CD14-positive monocyte (primary cell): ENCODE measurements at regions of chr12 and their contacts with region 1.

Region 1: DNA sequence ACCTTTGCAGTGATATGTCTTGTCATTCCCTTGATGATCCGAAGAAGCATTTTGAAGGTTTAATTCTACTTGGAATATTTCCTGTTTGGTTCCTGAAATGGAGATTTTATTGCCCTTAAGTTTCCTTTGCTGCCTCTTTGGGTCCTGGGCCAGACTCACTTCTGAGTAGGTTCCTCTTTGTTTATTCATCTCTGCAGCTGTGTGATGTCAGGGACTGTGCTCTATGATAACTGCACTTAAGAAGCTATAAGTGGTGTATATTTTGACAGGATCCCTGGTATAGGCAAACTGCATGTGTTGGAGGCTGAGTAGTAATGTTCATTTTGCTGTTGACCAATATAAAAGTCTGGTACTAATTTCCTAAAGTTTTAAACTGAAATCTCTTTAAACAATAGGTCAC is at the start of gene KLRC4:
- DNase-seq: peak; percentile 8 to 29 (median 10)
- H3K4me3 ChIP-seq: no peak within 1 kb of the TSS
- H3K4me3 Mint-ChIP-seq: no peak within 1 kb of the TSS
- H3K27ac ChIP-seq: no peak within 1 kb of the TSS
- H3K27ac Mint-ChIP-seq: no peak within 1 kb of the TSS
- H3K4me1 ChIP-seq: peaks cover 11 to 14% of the 10 kb centered on the region in 2 donors
- H3K4me1 Mint-ChIP-seq: peaks cover 12% of the 10 kb centered on the region
- H3K27me3 ChIP-seq: peaks cover 0 to 16% of the 10 kb centered on the region in 2 donors
- H3K27me3 Mint-ChIP-seq: peaks cover 5 to 10% (median 9%) of the 10 kb centered on the region in 3 donors
- CTCF ChIP-seq: no peak
- polyA plus RNA-seq, gene KLRC4: not detected

Region 2: DNA sequence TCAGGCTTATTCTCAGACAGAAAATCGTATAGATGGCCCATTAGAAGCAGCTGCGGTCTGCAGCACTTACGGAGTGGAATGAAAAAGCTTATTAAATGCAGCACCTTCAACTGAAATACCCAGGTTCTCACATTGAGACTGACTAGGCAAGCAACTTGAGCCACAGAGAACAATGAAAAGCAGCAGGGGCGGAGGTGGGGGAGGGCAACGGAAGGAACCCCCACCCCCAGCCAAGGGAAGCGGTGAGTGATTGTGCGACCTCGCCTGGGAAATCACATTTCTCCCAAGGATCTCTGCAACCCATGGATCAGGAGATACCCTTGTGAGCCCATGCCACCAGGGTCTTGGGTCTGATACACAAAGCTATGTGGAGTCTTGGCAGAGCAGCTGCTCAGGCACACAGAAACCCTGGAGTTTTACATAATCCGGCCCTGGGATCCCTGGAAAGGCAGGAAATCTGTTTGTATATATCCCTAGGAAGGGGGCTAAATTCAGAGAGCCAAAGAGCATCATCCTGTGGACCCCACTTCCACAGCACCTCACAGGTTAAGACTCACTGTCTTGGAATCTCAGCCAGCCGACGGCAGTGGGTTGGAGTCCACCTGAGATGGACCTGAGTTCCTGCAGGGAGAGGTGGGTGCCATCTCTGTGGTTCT is 1239.3 kb before region 1 on chr12:
- intact Hi-C with region 1: loop called in 1 of 2 experiments (anchors 10 kb)
- DNase-seq: no peak
- H3K4me3 ChIP-seq: no peak overlapping the region
- H3K4me3 Mint-ChIP-seq: no peak overlapping the region
- H3K27ac ChIP-seq: no peak overlapping the region
- H3K27ac Mint-ChIP-seq: no peak overlapping the region
- H3K4me1 ChIP-seq: no peaks in the 10 kb centered on the region
- H3K4me1 Mint-ChIP-seq: no peaks in the 10 kb centered on the region
- H3K27me3 ChIP-seq: no peaks in the 10 kb centered on the region
- H3K27me3 Mint-ChIP-seq: peaks cover 0 to 4% (median 2%) of the 10 kb centered on the region in 3 donors
- CTCF ChIP-seq: no peak

Region 3: DNA sequence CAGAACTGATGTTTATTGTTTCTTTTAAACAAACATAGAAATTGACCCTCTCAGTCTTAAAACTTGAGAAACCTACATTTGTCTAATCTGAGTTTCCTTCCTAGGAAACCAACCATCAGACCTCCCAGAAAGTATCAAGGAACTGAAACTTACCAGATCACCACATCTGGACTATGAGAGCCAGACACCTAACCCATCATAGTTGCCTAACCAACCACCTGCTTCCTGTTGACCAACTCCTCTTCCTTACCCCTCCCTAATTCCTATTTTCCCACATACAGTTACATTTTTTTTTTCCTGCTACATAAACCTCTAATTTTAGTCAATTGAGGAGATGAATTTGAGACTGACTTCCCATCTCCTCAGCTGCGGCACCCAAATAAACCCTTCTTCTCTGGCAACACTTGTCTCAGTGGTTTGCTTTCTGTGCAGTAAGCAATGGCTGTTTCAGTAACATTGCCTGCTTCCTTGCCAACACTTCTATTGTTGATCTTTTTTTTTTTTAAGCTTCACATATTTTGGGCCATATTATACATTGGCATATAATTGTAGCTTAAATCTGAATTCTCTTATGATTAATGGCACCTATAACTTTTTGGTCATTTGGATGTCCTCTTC is 67.4 kb before region 1 on chr12:
- intact Hi-C with region 1: no loop called
- DNase-seq: peak in 1 of 3 donors; percentile 29
- H3K4me3 ChIP-seq: no peak overlapping the region
- H3K4me3 Mint-ChIP-seq: no peak overlapping the region
- H3K27ac ChIP-seq: no peak overlapping the region
- H3K27ac Mint-ChIP-seq: peak overlapping the region in 2 of 7 donors; percentile 20 to 44
- H3K4me1 ChIP-seq: peaks cover 7 to 13% of the 10 kb centered on the region in 2 donors
- H3K4me1 Mint-ChIP-seq: peaks cover 15% of the 10 kb centered on the region
- H3K27me3 ChIP-seq: no peaks in the 10 kb centered on the region
- H3K27me3 Mint-ChIP-seq: no peaks in the 10 kb centered on the region
- CTCF ChIP-seq: no peak

Region 4: DNA sequence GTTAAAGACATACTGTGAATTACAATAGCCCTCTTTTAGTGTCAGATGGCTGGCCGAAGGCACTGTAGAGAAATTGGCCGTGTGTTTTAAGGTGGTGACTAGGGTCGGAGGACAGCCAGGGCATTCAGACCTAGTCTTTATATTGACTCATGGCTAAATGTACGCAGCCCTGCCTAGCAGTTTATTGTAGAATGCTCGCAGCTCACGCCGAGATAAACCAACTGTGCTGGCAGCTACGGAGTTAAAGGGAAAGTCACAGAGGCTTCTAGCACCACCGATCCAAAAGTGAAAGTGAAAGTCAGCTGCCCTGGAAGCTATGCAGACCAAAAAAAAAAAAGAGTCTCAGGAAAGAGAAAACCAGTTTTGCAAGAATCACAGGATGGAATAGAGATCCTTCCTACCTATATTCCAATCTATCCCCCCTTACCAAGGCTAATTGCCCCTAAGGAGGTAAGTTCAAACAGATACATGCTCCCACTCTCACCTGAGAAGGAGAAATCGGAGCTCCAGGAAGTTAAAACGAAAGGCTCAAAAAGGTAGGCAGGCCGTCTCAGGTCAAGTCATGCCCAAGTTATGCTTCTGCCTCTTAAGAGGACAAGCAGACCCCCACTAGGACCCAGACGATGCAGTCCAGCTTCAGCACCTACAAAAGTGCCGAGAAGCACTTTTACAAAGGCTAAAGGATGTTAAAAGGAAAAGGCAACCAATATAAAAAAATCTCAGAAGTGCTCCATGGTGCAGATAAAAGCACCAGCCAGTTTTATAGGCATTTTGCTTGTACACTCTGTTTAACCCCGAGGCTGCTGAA is 44.4 kb before region 1 on chr12:
- intact Hi-C with region 1: loop called in 1 of 2 experiments (anchors 5 kb)
- DNase-seq: peak; percentile 56 to 71 (median 67)
- H3K4me3 ChIP-seq: peak overlapping the region; percentile 52 to 99 (median 91)
- H3K4me3 Mint-ChIP-seq: no peak overlapping the region
- H3K27ac ChIP-seq: peak overlapping the region; percentile 69 to 97
- H3K27ac Mint-ChIP-seq: no peak overlapping the region
- H3K4me1 ChIP-seq: peaks cover 24 to 29% of the 10 kb centered on the region in 2 donors
- H3K4me1 Mint-ChIP-seq: peaks cover 11% of the 10 kb centered on the region
- H3K27me3 ChIP-seq: no peaks in the 10 kb centered on the region
- H3K27me3 Mint-ChIP-seq: no peaks in the 10 kb centered on the region
- CTCF ChIP-seq: no peak